Esophagus muscularis mucosa (tissue), 4 donors: ENCODE measurements at regions of chr9 and their contacts with region 1.

Region 1: GRCh38 chr9:100322954-100323536 is 29.7 kb downstream of the TEX10 start:
- DNase-seq: no peak
- H3K4me3 ChIP-seq: no peak overlapping the region
- H3K27ac ChIP-seq: no peak overlapping the region
- H3K4me1 ChIP-seq: no peaks in the 10 kb centered on the region
- H3K27me3 ChIP-seq: no peaks in the 10 kb centered on the region
- CTCF ChIP-seq: peak; percentile 47 to 80 (median 54)
- EP300 ChIP-seq: no peak
- POLR2A ChIP-seq: no peak

Region 2: GRCh38 chr9:99184475-99185347 is 1138.3 kb before region 1 on chr9:
- intact Hi-C with region 1: loop called (anchors 10 kb)
- DNase-seq: peak; percentile 96
- H3K4me3 ChIP-seq: peak overlapping the region; percentile 35 to 47 (median 41)
- H3K27ac ChIP-seq: peak overlapping the region; percentile 21 to 50 (median 36)
- H3K4me1 ChIP-seq: peaks cover 10 to 15% (median 14%) of the 10 kb centered on the region in 4 donors
- H3K27me3 ChIP-seq: no peaks in the 10 kb centered on the region
- CTCF ChIP-seq: peak; percentile 89 to 99 (median 89)
- EP300 ChIP-seq: no peak
- POLR2A ChIP-seq: no peak

Region 3: GRCh38 chr9:100267211-100267610 is 55.8 kb before region 1 on chr9:
- intact Hi-C with region 1: no loop called
- DNase-seq: no peak
- H3K4me3 ChIP-seq: no peak overlapping the region
- H3K27ac ChIP-seq: no peak overlapping the region
- H3K4me1 ChIP-seq: no peaks in the 10 kb centered on the region
- H3K27me3 ChIP-seq: no peaks in the 10 kb centered on the region
- CTCF ChIP-seq: no peak
- EP300 ChIP-seq: no peak
- POLR2A ChIP-seq: no peak